ENCODE measurements at regions of chr15 and their contacts with region 1.

Region 1: DNA sequence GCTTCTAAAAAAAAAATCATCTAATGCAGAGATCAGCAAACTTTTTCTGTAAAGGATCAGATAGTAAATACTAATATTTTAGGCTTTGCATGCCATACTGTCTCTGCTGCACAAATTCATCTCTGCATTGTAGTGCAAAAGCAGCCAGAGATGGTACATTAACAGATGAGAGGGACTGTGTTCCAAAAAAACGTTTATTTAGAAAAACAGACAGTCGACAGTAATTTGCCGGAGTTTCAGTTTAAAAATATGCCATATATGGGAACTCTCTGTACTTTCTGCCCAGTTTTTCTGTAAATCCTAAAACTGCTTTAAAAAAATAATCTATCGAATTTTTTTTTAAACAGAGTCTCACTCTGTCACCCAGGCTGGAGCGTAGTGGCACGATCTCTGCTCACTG is 14.3 kb downstream of the MINDY2 start:
- DNase-seq: no peak
- H3K4me3 ChIP-seq: no peak overlapping the region
- H3K27ac ChIP-seq: no peak overlapping the region
- H3K4me1 ChIP-seq: no peaks in the 10 kb centered on the region
- H3K27me3 ChIP-seq: no peaks in the 10 kb centered on the region
- CTCF ChIP-seq: no peak

Region 2: GRCh38 chr15:58608129-58608590 is 177.2 kb before region 1 on chr15:
- CTCF ChIA-PET with region 1: no interaction called
- POLR2A ChIA-PET with region 1: interaction called, 10 read pairs
- intact Hi-C with region 1: no loop called
- DNase-seq: no peak
- H3K4me3 ChIP-seq: no peak overlapping the region
- H3K27ac ChIP-seq: no peak overlapping the region
- H3K4me1 ChIP-seq: peaks cover 44% of the 10 kb centered on the region
- H3K27me3 ChIP-seq: no peaks in the 10 kb centered on the region
- CTCF ChIP-seq: no peak

Region 3: GRCh38 chr15:58987489-58988005 is 202.2 kb after region 1 on chr15 and contains the start of gene RNF111:
- CTCF ChIA-PET with region 1: no interaction called
- POLR2A ChIA-PET with region 1: interaction called, 10 read pairs
- intact Hi-C with region 1: no loop called
- DNase-seq: peak; percentile 84 to 88
- H3K4me3 ChIP-seq: peak within 1 kb of the TSS; percentile 66
- H3K27ac ChIP-seq: peak within 1 kb of the TSS; percentile 49
- H3K4me1 ChIP-seq: peaks cover 12% of the 10 kb centered on the region; the same call in 1 of the 2 replicates
- H3K27me3 ChIP-seq: no peaks in the 10 kb centered on the region
- CTCF ChIP-seq: no peak
- total RNA-seq, gene RNF111: 30.2 and 37.7 TPM in 2 replicates